ENCODE measurements at regions of chr2 and their contacts with region 1.

Region 1: DNA sequence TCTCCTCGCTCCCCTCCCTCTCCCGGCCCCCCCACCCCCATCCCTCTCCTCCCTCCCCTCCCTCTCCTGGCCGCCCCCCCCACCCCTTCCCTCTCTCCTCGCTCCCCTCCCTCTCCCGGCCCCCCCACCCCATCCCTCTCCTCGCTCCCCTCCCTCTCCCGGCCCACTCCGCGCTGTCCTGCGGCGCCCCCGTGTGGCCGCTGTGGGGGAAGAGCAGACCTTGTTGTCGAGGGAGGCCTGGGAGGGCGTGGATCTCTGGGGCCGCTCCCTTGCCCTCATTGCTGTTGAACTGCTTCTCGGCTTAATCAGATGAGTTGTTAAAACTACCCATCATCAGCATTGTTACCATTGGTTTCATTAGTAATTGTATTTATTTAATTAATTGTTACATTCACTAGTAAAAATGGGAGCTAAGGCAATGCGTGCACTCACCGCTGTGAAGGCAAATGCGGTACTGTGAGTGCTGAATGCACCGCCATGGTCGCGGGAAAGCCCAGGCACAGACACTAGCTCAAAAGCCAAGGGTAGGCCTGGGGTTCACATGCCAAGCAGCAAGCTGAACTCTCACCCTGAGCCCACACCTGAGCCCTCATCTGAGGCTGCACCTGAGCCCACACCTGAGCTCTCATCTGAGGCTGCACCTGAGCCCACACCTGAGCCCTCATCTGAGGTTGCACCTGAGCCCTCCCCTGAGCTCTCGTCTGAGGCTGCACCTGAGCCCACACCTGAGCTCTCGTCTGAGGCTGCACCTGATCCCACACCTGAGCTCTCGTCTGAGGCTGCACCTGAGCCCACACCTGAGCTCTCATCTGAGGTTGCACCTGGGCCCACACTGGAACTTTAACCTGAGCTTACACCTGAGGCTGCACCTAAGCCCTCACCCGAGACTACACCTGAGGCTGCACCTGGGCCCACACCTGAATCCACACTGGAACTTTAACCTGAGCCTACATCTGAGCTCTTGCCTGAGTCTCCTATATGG is 8.8 kb downstream of the RTP5 start:
- DNase-seq: no peak
- ATAC-seq: peak; percentile 29
- H3K4me3 ChIP-seq: no peak overlapping the region
- H3K27ac ChIP-seq: no peak overlapping the region
- H3K4me1 ChIP-seq: peaks cover 6% of the 10 kb centered on the region
- H3K27me3 ChIP-seq: no peaks in the 10 kb centered on the region
- CTCF ChIP-seq: peak; percentile 68 to 86 (median 74)
- EP300 ChIP-seq: no peak
- POLR2A ChIP-seq: no peak
- RAD21 ChIP-seq: peak; percentile 94

Region 2: DNA sequence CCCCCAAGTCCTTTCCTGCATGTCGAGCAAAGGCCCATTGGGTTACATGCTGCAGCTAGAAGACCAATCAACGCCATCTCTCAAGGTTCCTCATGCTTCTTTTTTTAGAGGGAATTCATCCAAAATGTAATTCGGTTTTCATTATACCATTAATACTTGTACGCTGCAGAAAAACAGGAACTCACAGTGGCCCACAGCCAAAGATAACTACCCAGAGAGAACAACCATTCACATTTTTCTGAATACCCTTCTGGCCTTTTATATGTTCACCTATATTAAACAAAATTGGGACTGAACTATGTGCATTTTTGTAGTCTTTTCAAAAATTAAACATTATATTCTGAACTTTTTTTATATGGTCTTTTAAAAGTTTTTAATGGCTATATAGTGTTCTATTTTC is 496.4 kb before region 1 on chr2:
- CTCF ChIA-PET with region 1: no interaction called
- POLR2A ChIA-PET with region 1: no interaction called
- RAD21 ChIA-PET with region 1: no interaction called
- SMC1A ChIA-PET with region 1: no interaction called
- in situ Hi-C with region 1: no loop called
- intact Hi-C with region 1: no loop called
- DNase-seq: no peak
- ATAC-seq: no peak
- H3K4me3 ChIP-seq: no peak overlapping the region
- H3K27ac ChIP-seq: no peak overlapping the region
- H3K4me1 ChIP-seq: peaks cover 7% of the 10 kb centered on the region; the same call in 1 of the 2 replicates
- H3K27me3 ChIP-seq: no peaks in the 10 kb centered on the region
- CTCF ChIP-seq: no peak
- EP300 ChIP-seq: no peak
- POLR2A ChIP-seq: no peak
- RAD21 ChIP-seq: no peak

Region 3: GRCh38 chr2:241508240-241509154 is 369.8 kb before region 1 on chr2 and contains the start of gene STK25:
- CTCF ChIA-PET with region 1: no interaction called
- POLR2A ChIA-PET with region 1: no interaction called
- RAD21 ChIA-PET with region 1: no interaction called
- SMC1A ChIA-PET with region 1: no interaction called
- in situ Hi-C with region 1: loop called (anchors 10 kb)
- intact Hi-C with region 1: loop called (anchors 2 kb)
- DNase-seq: peak; percentile 90
- ATAC-seq: peak; percentile 97
- H3K4me3 ChIP-seq: peak within 1 kb of the TSS; percentile 98
- H3K27ac ChIP-seq: peak within 1 kb of the TSS; percentile 64
- H3K4me1 ChIP-seq: peaks cover 16% of the 10 kb centered on the region
- H3K27me3 ChIP-seq: no peaks in the 10 kb centered on the region
- CTCF ChIP-seq: no peak
- EP300 ChIP-seq: peak in 1 of 2 experiments; percentile 20; a peak in 1 of 4 replicates
- POLR2A ChIP-seq: peak; percentile 95
- RAD21 ChIP-seq: no peak
- polyA plus RNA-seq, gene STK25: 6.0 to 14.0 TPM

Region 4: DNA sequence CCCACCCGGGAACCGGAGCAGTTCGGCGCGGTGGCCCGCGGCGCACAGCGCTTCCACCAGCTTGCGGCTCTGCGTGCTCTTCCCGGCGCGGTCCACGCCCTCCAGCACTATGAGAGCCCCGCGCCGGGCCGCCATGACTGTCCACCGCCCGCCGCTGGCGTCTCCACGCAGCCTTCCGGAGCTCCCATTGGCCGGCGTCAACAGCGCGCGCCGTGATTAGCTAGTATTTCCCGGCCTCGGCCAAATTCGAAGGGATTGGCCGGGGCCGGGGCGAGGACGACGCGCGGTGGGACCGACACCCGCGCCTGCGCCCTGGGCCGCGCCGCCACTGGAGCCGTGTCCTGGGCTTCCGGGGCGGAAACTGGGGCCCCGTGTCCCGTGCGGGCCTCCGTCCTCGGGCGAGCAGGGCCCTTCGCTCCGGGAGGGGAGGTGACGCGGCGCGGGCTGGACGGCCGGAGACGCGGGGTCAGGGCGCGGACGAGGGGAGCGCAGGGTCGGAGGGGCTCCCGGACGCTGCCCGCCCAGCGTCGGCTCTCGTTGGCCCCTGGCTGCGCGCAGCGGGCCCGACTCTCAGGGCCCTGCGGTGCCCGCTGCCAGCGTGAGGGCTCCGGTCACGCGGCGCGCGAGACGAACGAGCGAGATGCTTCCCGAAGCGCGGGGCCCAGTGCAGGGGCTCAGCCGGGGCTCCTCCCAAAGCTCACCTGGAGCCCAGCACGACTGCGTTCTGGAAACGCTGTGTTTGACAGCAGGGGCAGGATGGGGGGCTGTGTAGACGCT is 191.4 kb before region 1 on chr2 and contains the start of gene DTYMK:
- CTCF ChIA-PET with region 1: interaction called, 13 read pairs
- POLR2A ChIA-PET with region 1: interaction called, 4 read pairs
- RAD21 ChIA-PET with region 1: interaction called, 4 read pairs
- SMC1A ChIA-PET with region 1: interaction called, 7 read pairs
- in situ Hi-C with region 1: no loop called
- intact Hi-C with region 1: loop called (anchors 1 kb)
- DNase-seq: peak; percentile 74
- ATAC-seq: peak; percentile 97
- H3K4me3 ChIP-seq: peak within 1 kb of the TSS; percentile 88
- H3K27ac ChIP-seq: peak within 1 kb of the TSS; percentile 90
- H3K4me1 ChIP-seq: peaks cover 7% of the 10 kb centered on the region; the same call in 1 of the 2 replicates
- H3K27me3 ChIP-seq: no peaks in the 10 kb centered on the region
- CTCF ChIP-seq: no peak
- EP300 ChIP-seq: no peak
- POLR2A ChIP-seq: peak; percentile 95
- RAD21 ChIP-seq: no peak
- polyA plus RNA-seq, gene DTYMK: 7.0 to 20.5 TPM

Region 5: DNA sequence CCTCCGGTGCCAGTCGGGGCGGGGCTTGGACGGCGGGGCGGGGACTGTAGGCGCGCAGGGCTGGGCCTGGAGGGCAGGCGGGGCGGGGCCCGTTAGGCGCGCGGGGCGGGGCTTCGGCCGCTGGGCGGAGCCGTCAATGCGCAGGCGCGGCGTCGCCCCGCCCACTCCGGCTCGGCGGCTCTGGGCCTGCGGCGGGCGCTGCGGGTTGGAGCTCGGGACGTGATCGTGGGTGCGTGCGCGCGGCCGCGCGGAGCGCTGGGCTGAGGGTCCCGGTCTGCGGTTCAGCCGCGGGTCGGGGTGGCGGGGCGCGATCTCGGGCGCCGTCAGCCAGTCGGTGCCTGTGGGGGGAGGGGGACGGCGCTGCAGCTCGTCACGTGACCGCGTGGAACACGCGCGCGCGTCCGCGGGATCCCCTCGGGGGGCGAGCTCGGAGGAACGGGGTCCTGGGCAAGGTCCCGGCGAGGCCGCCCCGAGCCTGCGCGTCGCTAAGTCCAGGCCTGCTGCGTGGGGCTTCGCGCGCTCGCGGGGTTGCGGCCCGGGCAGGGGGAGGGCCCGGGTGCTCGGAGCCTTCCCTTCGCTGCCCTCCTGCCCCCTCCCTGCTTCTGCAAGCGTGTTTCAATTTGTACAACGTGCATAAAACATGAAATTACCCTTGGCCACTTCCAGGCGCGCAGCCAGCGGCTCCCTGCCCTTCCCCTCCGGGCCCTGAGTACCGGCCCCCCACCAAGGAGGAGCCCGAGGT is 143.6 kb before region 1 on chr2 and contains the start of gene D2HGDH:
- CTCF ChIA-PET with region 1: interaction called, 10 read pairs
- POLR2A ChIA-PET with region 1: interaction called, 3 read pairs
- RAD21 ChIA-PET with region 1: interaction called, 7 read pairs
- SMC1A ChIA-PET with region 1: interaction called, 6 read pairs
- in situ Hi-C with region 1: no loop called
- intact Hi-C with region 1: loop called (anchors 1 kb)
- DNase-seq: no peak
- ATAC-seq: peak; percentile 90
- H3K4me3 ChIP-seq: peak within 1 kb of the TSS; percentile 84
- H3K27ac ChIP-seq: peak within 1 kb of the TSS; percentile 86
- H3K4me1 ChIP-seq: 0 out of 2 replicates have a peak, but pooled peaks cover 3% of the 10 kb centered on the region
- H3K27me3 ChIP-seq: no peaks in the 10 kb centered on the region
- CTCF ChIP-seq: no peak
- EP300 ChIP-seq: no peak
- POLR2A ChIP-seq: peak; percentile 83
- RAD21 ChIP-seq: no peak
- polyA plus RNA-seq, gene D2HGDH: 0.52 to 1.1 TPM

Region 6: DNA sequence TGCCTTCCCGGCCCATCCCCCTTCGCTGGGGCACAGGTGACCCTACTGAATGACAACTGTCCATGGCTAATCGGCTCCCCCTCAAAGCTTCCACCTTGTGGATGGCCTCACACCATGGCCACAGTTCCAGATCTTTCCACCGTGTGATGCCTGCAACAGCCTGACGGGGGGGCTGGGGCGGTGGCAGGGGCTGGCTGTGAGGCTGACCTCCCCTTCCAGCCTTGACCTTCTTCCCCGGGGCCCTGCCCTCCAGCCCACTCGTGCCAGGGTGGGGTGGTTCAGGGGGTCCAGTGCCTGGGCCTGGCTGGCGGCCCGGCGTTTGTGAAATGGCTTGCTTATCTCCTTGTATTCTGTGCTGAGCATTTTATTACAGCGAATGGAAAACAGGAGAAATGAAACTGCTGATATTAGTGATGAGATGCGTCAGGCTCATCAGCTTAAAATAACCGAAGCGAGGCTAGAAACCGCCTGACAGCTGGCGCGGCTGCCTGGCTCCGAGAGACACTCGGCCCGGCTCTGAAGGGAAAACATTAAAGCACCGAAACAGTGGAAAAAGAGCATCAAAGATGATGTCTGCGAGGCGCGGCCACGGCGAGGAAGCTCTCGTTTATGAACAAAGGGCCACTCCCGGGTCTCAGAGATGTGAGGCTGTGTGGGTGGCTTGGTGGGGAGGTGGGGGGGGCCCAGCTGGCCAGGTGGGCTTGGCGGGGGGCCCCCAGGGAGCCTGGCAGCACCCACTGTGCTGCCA is 18.7 kb before region 1 on chr2:
- CTCF ChIA-PET with region 1: interaction called, 10 read pairs
- POLR2A ChIA-PET with region 1: interaction called, 3 read pairs
- RAD21 ChIA-PET with region 1: no interaction called
- SMC1A ChIA-PET with region 1: interaction called, 6 read pairs
- in situ Hi-C with region 1: no loop called
- intact Hi-C with region 1: no loop called
- DNase-seq: no peak
- ATAC-seq: peak; percentile 66
- H3K4me3 ChIP-seq: peak overlapping the region; percentile 56; the same call in 1 of the 2 replicates
- H3K27ac ChIP-seq: peak overlapping the region; percentile 97
- H3K4me1 ChIP-seq: peaks cover 43% of the 10 kb centered on the region
- H3K27me3 ChIP-seq: no peaks in the 10 kb centered on the region; a peak in 1 of 4 replicates
- CTCF ChIP-seq: peak; percentile 22 to 56 (median 47)
- EP300 ChIP-seq: peak; percentile 80 to 85
- POLR2A ChIP-seq: peak; percentile 49; the same call in 1 of the 2 replicates
- RAD21 ChIP-seq: no peak